PC-3 (cell line): ENCODE measurements at regions of chr7 and their contacts with region 1.

Region 1: GRCh38 chr7:148962823-148963582 is 65.3 kb downstream of the PDIA4 start:
- DNase-seq: peak; percentile 57
- ATAC-seq: peak; percentile 23
- H3K4me3 ChIP-seq: peak overlapping the region; percentile 76
- H3K27ac ChIP-seq: no peak overlapping the region
- H3K4me1 ChIP-seq: peaks cover 6% of the 10 kb centered on the region; the same call in 1 of the 2 replicates
- H3K27me3 ChIP-seq: no peaks in the 10 kb centered on the region
- CTCF ChIP-seq: peak; percentile 94

Region 2: GRCh38 chr7:148264933-148265557 is 698.0 kb before region 1 on chr7:
- CTCF ChIA-PET with region 1: no interaction called
- POLR2A ChIA-PET with region 1: no interaction called
- intact Hi-C with region 1: loop called (anchors 2 kb)
- DNase-seq: peak; percentile 69
- ATAC-seq: peak; percentile 49
- H3K4me3 ChIP-seq: no peak overlapping the region
- H3K27ac ChIP-seq: no peak overlapping the region
- H3K4me1 ChIP-seq: no peaks in the 10 kb centered on the region
- H3K27me3 ChIP-seq: peaks cover 29% of the 10 kb centered on the region
- CTCF ChIP-seq: peak; percentile 72

Region 3: DNA sequence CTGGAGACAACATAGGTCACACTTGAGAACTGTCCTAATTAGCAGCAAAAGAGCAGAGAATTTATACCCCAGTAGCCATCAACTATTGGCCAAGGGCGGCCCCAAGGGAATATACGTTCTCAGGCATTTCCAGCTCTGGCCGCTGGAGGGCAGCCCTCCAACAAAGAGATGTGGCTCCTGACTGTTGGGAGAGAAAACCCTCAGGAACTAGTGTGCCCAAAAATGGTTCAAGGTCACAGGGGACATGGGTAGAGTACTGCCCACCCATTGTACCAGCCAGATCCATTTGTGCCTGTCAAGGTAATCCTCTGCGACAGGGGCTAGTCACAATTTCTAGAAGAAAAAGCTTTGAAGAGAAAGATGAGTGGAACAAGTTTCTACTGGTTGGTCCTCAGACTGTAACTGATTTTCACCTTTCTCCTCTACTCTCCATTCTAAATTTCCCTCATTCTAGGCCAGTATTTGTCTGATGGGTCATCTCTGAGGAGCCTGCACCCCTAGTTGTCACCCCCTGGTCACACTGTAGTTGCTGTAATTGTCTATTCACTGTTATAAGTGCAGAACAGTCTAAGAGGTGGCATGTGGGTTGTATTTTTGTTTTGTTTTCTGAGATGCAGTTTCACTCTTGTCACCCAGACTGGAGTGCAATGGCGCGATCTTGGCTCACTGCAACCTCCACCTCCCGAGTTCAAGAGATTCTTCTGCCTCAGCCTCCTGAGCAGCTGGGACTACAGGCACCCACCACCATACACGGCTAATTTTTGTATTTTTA is 387.2 kb before region 1 on chr7:
- CTCF ChIA-PET with region 1: interaction called, 3 read pairs
- POLR2A ChIA-PET with region 1: no interaction called
- intact Hi-C with region 1: loop called (anchors 1 kb)
- DNase-seq: peak; percentile 71
- ATAC-seq: peak; percentile 90
- H3K4me3 ChIP-seq: no peak overlapping the region
- H3K27ac ChIP-seq: no peak overlapping the region
- H3K4me1 ChIP-seq: no peaks in the 10 kb centered on the region
- H3K27me3 ChIP-seq: no peaks in the 10 kb centered on the region
- CTCF ChIP-seq: peak; percentile 85

Region 4: GRCh38 chr7:148799893-148800545 is 163.0 kb before region 1 on chr7:
- CTCF ChIA-PET with region 1: no interaction called
- POLR2A ChIA-PET with region 1: no interaction called
- intact Hi-C with region 1: loop called (anchors 5 kb)
- DNase-seq: no peak
- ATAC-seq: no peak
- H3K4me3 ChIP-seq: no peak overlapping the region
- H3K27ac ChIP-seq: no peak overlapping the region
- H3K4me1 ChIP-seq: no peaks in the 10 kb centered on the region
- H3K27me3 ChIP-seq: no peaks in the 10 kb centered on the region
- CTCF ChIP-seq: no peak

Region 5: DNA sequence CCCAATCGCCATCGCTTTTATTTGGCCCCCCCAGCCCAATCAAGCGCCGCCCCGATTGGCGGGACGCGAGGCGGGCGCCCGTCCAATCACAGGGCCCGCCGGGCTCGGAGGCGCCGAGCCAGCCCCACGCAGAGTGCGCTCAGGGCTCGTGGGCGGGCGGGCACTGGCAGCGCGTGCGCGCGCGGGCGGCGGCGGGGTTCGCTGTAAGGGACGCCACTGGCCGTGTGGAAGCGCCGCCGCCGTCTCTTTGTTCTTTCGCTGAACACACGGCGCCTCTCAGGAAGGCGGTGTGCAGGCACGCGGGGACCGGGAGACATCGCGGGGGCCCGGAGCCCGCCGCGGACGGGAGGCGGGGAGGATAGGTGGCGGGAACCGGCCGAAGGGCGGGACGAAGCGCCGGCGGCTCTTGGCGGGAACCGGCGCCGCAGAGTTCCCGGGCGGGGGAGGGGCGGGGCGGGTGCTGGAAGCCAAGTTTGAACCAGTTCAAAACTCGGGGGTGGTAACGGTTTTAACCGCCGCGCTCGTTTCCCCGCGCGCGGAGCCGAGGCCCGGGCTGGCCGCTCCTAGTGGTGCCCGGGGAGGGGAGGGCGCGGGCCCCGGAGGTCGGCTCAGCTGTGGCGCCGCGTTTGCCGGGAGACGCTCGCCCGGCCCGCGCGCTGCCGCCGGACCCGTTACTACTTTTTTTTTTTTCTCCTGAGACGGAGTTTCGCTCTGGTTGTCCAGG is 78.5 kb before region 1 on chr7:
- CTCF ChIA-PET with region 1: interaction called, 4 read pairs
- POLR2A ChIA-PET with region 1: no interaction called
- intact Hi-C with region 1: loop called (anchors 2 kb)
- DNase-seq: peak; percentile 92
- ATAC-seq: peak; percentile 91
- H3K4me3 ChIP-seq: peak overlapping the region; percentile 80
- H3K27ac ChIP-seq: peak overlapping the region; percentile 81
- H3K4me1 ChIP-seq: peaks cover 20% of the 10 kb centered on the region
- H3K27me3 ChIP-seq: no peaks in the 10 kb centered on the region
- CTCF ChIP-seq: no peak

Region 6: GRCh38 chr7:149300620-149301285 is 337.8 kb after region 1 on chr7:
- CTCF ChIA-PET with region 1: no interaction called
- POLR2A ChIA-PET with region 1: no interaction called
- intact Hi-C with region 1: no loop called
- DNase-seq: no peak
- ATAC-seq: no peak
- H3K4me3 ChIP-seq: no peak overlapping the region
- H3K27ac ChIP-seq: no peak overlapping the region
- H3K4me1 ChIP-seq: no peaks in the 10 kb centered on the region
- H3K27me3 ChIP-seq: no peaks in the 10 kb centered on the region
- CTCF ChIP-seq: no peak